ENCODE measurements at regions of chr14 and their contacts with region 1.

Region 1: GRCh38 chr14:106872611-106873446 is 1346.4 kb downstream of the TMEM121 start:
- DNase-seq: peak; percentile 97
- H3K4me3 Mint-ChIP-seq: peak overlapping the region; percentile 64
- H3K27ac Mint-ChIP-seq: peak overlapping the region; percentile 72
- H3K4me1 Mint-ChIP-seq: peaks cover 22% of the 10 kb centered on the region
- H3K27me3 Mint-ChIP-seq: no peaks in the 10 kb centered on the region
- CTCF ChIP-seq: peak; percentile 71

Region 2: GRCh38 chr14:106506881-106507305 is 365.9 kb before region 1 on chr14:
- CTCF ChIA-PET with region 1: no interaction called
- intact Hi-C with region 1: no loop called
- DNase-seq: no peak
- H3K4me3 Mint-ChIP-seq: no peak overlapping the region
- H3K27ac Mint-ChIP-seq: no peak overlapping the region
- H3K4me1 Mint-ChIP-seq: no peaks in the 10 kb centered on the region
- H3K27me3 Mint-ChIP-seq: peaks cover 55% of the 10 kb centered on the region
- CTCF ChIP-seq: no peak

Region 3: DNA sequence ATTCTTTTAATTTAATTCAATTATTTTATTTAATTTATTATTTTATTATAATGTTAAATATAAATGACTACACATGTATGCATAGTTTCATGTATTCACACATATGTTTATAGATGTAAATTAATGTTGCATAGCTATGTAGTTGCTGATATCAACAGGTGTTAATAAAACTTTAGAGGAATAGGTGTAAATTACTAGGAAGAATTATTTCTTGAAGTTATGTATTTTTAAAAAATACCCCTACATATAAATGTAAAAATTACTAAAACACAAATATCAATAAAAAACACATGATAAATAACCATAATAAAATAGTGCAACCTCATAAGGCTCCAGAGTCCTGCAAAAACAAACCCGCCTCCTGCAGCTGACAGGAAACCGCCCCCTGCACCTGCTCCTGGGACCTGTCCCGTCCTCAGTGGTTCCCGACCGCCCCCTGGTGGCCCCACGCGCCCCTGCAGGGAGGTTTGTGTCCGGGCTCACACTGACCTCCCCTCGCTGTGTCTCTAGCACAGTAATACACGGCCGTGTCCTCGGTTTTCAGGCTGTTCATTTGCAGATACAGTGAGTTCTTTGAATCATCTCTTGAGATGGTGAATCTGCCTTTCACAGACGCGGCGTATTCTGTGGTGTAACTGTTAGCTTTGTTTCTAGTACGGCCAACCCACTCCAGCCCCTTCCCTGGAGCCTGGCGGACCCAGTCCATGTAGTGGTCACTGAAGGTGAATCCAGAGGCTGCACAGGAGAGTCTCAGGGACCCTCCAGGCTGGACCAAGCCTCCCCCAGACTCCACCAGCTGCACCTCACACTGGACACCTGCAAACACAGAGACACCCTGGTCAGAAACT is 82.4 kb before region 1 on chr14:
- CTCF ChIA-PET with region 1: interaction called, 10 read pairs
- intact Hi-C with region 1: no loop called
- DNase-seq: peak; percentile 92
- H3K4me3 Mint-ChIP-seq: no peak overlapping the region
- H3K27ac Mint-ChIP-seq: no peak overlapping the region
- H3K4me1 Mint-ChIP-seq: peaks cover 8% of the 10 kb centered on the region
- H3K27me3 Mint-ChIP-seq: peaks cover 9% of the 10 kb centered on the region
- CTCF ChIP-seq: peak; percentile 90

Region 4: DNA sequence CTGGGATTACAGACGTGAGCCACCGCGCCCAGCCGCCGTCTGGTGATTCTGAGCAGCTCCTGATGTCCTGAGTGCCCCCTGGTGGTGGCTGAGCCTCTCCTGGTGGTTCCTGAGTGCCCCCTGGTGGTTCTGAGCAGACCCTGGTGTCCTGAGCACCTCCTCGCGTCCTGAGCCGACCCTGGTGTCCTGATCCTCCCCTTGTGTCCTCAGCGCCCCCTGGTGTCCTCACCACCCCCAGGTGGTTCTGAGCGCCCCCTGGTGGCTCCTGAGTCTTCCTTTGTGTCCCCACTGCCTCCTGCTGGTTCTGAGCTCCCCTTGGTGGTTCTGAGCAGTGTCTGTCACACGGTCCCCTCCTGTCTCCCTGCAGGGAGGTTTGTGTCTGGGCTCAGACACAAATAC is 41.5 kb before region 1 on chr14:
- CTCF ChIA-PET with region 1: interaction called, 15 read pairs
- intact Hi-C with region 1: no loop called
- DNase-seq: peak; percentile 23
- H3K4me3 Mint-ChIP-seq: no peak overlapping the region
- H3K27ac Mint-ChIP-seq: peak overlapping the region; percentile 67
- H3K4me1 Mint-ChIP-seq: peaks cover 15% of the 10 kb centered on the region
- H3K27me3 Mint-ChIP-seq: no peaks in the 10 kb centered on the region
- CTCF ChIP-seq: peak; percentile 33

Region 5: DNA sequence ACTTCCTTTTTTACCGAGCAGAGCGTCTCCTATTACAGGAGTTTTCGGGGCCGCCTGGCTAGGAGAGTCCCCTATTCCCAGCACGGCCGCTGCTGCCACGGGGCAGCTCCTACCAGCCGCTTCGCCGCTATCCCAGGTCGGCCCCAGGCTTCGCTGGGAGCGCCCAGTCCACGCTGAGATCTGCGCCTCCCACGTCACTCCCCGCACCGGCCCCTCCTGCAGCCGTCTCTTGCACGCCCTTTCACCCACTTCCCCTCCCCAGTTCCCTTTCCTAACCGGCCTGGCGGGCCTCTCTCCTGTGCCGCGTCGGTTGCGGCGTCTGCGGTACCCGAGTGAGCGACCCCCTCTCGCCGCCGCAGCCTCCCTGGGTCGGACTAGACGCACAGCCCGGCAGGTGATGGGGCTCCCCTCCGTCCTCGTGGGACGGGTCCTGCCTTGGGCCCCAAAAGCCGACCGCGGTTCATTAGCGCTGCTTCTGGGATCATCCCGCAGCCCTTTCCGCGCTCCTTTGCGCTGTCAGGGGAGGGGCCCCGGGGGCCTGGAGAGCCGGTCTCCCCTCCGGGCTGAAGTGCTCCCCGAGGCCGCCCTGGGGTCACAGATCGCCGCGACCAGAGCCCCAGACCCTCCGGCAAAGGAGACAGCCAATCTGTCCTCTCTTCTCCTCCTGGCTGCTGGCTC is 28.1 kb before region 1 on chr14:
- CTCF ChIA-PET with region 1: interaction called, 119 read pairs
- intact Hi-C with region 1: loop called (anchors 1 kb)
- DNase-seq: peak; percentile 81
- H3K4me3 Mint-ChIP-seq: peak overlapping the region; percentile 94
- H3K27ac Mint-ChIP-seq: peak overlapping the region; percentile 97
- H3K4me1 Mint-ChIP-seq: peaks cover 50% of the 10 kb centered on the region
- H3K27me3 Mint-ChIP-seq: no peaks in the 10 kb centered on the region
- CTCF ChIP-seq: no peak